Naive thymus-derived CD4-positive, alpha-beta T cell (primary cell): ENCODE measurements at regions of chr4 and their contacts with region 1.

Region 1: DNA sequence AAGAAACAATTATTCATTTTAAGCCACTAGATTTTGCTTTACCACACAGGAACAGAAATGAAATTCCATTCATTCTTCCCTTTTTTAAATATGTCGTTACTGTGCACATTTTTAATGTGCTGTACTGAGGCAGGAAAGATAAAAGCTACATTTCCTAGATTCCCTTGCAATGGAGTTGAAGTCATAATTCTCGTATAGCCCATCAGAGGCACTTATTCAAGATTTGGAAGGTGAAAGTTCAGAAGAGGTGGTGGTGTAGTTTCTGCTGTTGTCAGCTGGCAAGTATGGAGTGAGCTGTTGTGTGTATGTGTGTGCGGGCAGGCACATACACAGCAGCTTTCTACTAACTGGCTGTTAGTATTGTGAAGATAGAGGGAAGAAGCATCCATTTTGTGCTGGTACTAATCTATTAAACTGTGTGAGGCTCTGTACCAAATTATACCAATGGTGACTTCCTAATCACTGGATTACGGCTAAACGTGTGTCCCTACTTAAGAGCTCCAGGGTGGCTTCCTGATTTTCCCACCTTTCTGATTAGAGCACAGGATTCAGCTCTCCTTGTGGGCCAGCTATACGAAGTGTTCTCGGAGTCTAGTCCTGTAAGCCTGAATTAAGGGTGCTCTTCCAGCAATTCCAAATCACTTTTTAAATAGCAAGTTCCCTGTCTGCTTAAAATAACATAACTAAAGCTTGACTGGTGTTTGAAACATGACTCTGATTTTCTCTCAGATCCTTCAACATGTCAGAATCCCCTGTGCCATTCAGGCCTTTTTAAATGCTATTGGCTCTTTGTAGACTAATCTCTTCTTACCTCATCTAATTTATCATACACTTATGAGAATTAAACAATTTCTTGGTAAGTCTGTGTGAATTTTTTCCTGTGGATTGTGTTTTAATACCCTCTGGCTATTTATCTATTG is 43.8 kb downstream of the PDS5A start:
- DNase-seq: no peak
- ATAC-seq: no peak
- H3K4me3 ChIP-seq: no peak overlapping the region
- H3K4me3 Mint-ChIP-seq: peak overlapping the region in 8 of 10 donors; percentile 0 to 63 (median 36)
- H3K27ac ChIP-seq: no peak overlapping the region
- H3K27ac Mint-ChIP-seq: peak overlapping the region; percentile 18 to 84 (median 58)
- H3K4me1 ChIP-seq: peaks cover 15 to 37% of the 10 kb centered on the region in 2 donors
- H3K4me1 Mint-ChIP-seq: peaks cover 28 to 75% (median 67%) of the 10 kb centered on the region in 7 donors
- H3K27me3 ChIP-seq: no peaks in the 10 kb centered on the region
- H3K27me3 Mint-ChIP-seq: no peaks in the 10 kb centered on the region

Region 2: DNA sequence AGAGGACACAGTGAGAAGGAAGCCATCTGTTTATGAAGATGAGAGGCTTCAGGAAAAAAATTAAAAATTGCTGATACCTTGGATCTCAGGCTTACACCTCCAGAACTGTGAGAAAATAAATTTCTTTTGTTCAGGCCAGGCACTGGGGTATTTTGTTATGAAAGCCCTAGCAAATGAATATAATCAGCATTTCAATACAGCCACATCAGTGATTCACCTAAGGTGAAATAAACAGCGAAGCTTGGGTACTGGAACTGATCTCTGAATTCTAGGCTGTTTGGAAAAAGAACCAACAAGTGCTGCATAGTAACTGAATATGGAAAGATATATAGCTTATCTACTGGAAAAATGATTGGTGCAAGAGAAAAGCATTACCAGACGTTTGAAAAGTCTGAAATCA is 44.7 kb before region 1 on chr4:
- CTCF ChIA-PET with region 1: no interaction called
- POLR2A ChIA-PET with region 1: no interaction called
- intact Hi-C with region 1: no loop called
- DNase-seq: no peak
- ATAC-seq: no peak
- H3K4me3 ChIP-seq: no peak overlapping the region
- H3K4me3 Mint-ChIP-seq: no peak overlapping the region
- H3K27ac ChIP-seq: no peak overlapping the region
- H3K27ac Mint-ChIP-seq: no peak overlapping the region
- H3K4me1 ChIP-seq: no peaks in the 10 kb centered on the region
- H3K4me1 Mint-ChIP-seq: peaks cover 0 to 12% (median 0%) of the 10 kb centered on the region in 7 donors
- H3K27me3 ChIP-seq: no peaks in the 10 kb centered on the region
- H3K27me3 Mint-ChIP-seq: no peaks in the 10 kb centered on the region

Region 3: DNA sequence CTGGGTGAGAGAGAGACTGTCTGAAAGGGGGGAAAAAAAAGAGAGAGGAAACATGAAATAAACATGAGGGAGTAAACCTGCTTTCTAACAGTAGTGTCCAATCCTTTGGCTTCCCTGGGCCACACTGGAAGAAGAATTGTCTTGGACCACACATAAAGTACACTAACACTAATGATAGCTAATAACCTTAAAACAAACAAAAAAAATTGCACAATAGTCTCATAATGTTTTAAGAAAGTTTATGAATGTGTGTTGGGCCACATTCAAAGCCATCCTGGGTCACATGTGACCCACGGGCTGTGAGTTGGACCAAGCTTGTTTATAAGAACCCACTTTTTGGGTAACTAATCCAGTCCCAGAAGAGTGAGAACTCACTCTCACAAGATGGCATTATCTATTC is 13.5 kb after region 1 on chr4:
- CTCF ChIA-PET with region 1: no interaction called
- POLR2A ChIA-PET with region 1: no interaction called
- intact Hi-C with region 1: loop called in 1 of 2 experiments (anchors 2 kb)
- DNase-seq: no peak
- ATAC-seq: no peak
- H3K4me3 ChIP-seq: no peak overlapping the region
- H3K4me3 Mint-ChIP-seq: peak overlapping the region in 2 of 10 donors; percentile 24 to 29
- H3K27ac ChIP-seq: no peak overlapping the region
- H3K27ac Mint-ChIP-seq: peak overlapping the region in 6 of 9 donors; percentile 23 to 59 (median 40)
- H3K4me1 ChIP-seq: peaks cover 4 to 5% of the 10 kb centered on the region in 2 donors
- H3K4me1 Mint-ChIP-seq: peaks cover 23 to 74% (median 46%) of the 10 kb centered on the region in 7 donors
- H3K27me3 ChIP-seq: no peaks in the 10 kb centered on the region
- H3K27me3 Mint-ChIP-seq: no peaks in the 10 kb centered on the region